Activated T-helper 2 cell treated with anti-CD3 and anti-CD28 coated beads, Interferon-gamma antibody, Interleukin-2, Interleukin-4, amounts not matched to agents 10 μg/mL and 5 μg/mL and 100 μg/mL, durations not matched to agents 14 hours and 24 hours and 36 hours (primary cell): ENCODE measurements at regions of chr7 and their contacts with region 1.

Region 1: DNA sequence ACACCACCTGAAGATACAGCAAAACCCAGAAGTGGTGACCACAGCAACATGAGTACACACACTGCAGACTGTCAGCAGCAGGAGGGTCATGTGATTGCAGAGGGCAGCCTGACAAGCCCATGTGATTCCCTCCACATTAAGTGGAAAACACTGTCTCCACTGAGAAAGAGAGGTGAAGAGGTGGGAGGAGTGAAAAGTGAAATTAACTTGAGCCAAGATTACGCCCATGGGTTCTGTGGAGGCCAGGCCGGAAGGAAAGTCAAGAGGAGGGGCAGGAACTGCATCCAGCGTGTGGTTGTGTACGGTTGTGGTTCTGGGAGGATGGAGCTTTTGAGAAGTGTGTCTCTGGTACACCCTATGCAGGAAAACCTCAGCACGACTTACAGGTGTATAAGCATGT is 138.5 kb downstream of the PLXNA4 start:
- DNase-seq: peak; percentile 71
- H3K4me3 Mint-ChIP-seq: peak overlapping the region; percentile 6
- H3K27ac Mint-ChIP-seq: peak overlapping the region; percentile 69
- H3K4me1 Mint-ChIP-seq: peaks cover 85% of the 10 kb centered on the region
- H3K27me3 Mint-ChIP-seq: no peaks in the 10 kb centered on the region

Region 2: DNA sequence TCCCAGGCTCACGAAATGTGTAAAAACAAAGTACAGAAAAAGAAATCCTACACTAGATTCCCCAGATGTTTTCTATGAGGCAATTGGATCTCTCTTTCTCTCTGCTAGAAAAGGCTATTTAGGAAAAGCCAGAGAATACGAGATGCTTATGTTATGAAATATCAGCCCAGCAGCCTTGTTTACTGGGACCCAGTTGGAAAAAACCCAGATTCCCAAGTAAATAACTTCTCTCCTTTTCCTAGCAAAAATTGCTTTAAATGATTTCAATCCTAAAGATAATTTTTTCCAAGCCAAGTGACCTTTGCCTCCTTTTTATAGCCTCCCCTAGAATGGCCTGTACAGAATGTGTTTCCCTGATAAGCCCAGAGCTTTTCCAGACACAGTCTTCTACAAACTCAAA is 60.7 kb before region 1 on chr7:
- intact Hi-C with region 1: no loop called
- DNase-seq: no peak
- H3K4me3 Mint-ChIP-seq: no peak overlapping the region
- H3K27ac Mint-ChIP-seq: no peak overlapping the region
- H3K4me1 Mint-ChIP-seq: no peaks in the 10 kb centered on the region
- H3K27me3 Mint-ChIP-seq: peaks cover 24% of the 10 kb centered on the region

Region 3: DNA sequence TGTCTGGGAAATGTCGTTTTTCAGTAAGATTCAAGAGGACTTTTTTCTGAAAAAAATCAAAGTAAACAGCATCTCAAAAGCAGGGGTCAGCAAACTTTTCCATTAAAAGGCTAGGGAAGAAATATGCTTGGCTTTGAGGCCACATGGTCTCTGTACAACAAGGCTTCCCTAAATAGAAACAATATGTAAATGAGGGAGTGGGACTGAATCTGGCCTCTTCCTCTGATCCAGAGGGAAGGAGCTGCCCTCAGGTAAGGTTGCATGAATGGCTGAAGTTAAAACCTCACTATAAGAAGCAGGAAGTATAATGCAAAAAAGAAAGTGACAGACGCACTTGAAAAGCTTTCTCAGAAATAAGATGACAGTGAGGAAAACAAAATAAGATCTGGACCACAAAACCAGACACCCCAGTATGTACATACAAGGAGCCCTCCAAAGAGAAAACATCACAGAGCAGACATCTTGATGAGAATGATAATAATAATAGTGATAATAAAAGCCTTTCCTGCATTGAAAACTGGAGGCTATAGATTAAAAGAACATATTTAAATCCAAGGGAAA is 23.4 kb after region 1 on chr7:
- intact Hi-C with region 1: loop called (anchors 1 kb)
- DNase-seq: no peak
- H3K4me3 Mint-ChIP-seq: peak overlapping the region; percentile 46
- H3K27ac Mint-ChIP-seq: peak overlapping the region; percentile 82
- H3K4me1 Mint-ChIP-seq: peaks cover 47% of the 10 kb centered on the region
- H3K27me3 Mint-ChIP-seq: peaks cover 3% of the 10 kb centered on the region

Region 4: GRCh38 chr7:132526111-132526740 is 88.5 kb after region 1 on chr7:
- intact Hi-C with region 1: loop called (anchors 5 kb)
- DNase-seq: no peak
- H3K4me3 Mint-ChIP-seq: no peak overlapping the region
- H3K27ac Mint-ChIP-seq: peak overlapping the region; percentile 39
- H3K4me1 Mint-ChIP-seq: peaks cover 12% of the 10 kb centered on the region
- H3K27me3 Mint-ChIP-seq: peaks cover 2% of the 10 kb centered on the region

Region 5: GRCh38 chr7:132548489-132549078 is 110.9 kb after region 1 on chr7:
- intact Hi-C with region 1: no loop called
- DNase-seq: no peak
- H3K4me3 Mint-ChIP-seq: no peak overlapping the region
- H3K27ac Mint-ChIP-seq: no peak overlapping the region
- H3K4me1 Mint-ChIP-seq: peaks cover 13% of the 10 kb centered on the region
- H3K27me3 Mint-ChIP-seq: peaks cover 10% of the 10 kb centered on the region